ENCODE measurements at regions of chr7 and their contacts with region 1.

Region 1: DNA sequence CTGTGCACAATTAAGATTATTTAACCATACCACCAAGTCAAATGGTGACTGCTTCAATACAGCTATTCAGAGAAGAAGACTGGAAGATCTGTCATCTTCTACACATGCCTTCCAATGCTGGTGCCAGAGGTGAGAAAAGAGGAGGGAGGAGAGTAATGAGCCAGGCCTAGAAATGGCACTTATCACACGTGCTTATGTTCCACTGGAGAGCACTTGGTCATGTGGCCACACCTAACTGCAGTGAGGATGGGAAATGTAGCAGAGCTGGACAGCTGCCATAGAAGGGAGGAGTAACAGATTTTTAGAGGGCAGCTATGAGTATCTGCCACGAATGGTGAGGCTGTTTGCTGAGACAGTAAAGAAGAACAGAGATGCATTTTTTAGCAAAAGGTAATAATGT is 77.1 kb downstream of the MPLKIP start:
- DNase-seq: no peak
- H3K4me3 Mint-ChIP-seq: no peak overlapping the region
- H3K27ac Mint-ChIP-seq: no peak overlapping the region
- H3K4me1 Mint-ChIP-seq: peaks cover 5% of the 10 kb centered on the region
- H3K27me3 Mint-ChIP-seq: no peaks in the 10 kb centered on the region

Region 2: GRCh38 chr7:39580149-39580874 is 477.0 kb before region 1 on chr7:
- intact Hi-C with region 1: loop called (anchors 2 kb)
- DNase-seq: peak; percentile 56
- H3K4me3 Mint-ChIP-seq: no peak overlapping the region
- H3K27ac Mint-ChIP-seq: peak overlapping the region; percentile 36
- H3K4me1 Mint-ChIP-seq: peaks cover 12% of the 10 kb centered on the region
- H3K27me3 Mint-ChIP-seq: no peaks in the 10 kb centered on the region

Region 3: DNA sequence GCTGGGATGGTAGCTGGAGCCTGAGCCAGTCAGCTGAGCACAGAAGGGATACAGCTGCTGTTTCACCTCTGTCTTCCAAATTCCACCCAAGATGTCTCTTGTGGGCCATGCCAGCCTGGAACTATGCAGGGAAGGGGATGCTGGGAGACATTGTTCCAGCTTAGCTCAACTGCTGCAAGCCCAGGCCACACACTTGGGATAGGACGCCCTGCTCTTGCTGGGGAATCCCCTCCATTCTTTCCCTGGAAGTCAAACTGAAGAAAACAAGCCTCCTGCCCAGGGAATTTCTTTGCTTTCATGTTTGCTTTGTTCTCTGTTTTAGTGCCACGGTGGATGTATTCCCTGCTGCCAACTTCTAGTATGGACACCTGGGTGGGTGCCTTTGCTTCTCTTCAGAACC is 162.4 kb before region 1 on chr7:
- intact Hi-C with region 1: loop called (anchors 1 kb)
- DNase-seq: no peak
- H3K4me3 Mint-ChIP-seq: no peak overlapping the region
- H3K27ac Mint-ChIP-seq: no peak overlapping the region
- H3K4me1 Mint-ChIP-seq: no peaks in the 10 kb centered on the region
- H3K27me3 Mint-ChIP-seq: peaks cover 18% of the 10 kb centered on the region